Breast epithelium (tissue), 4 donors: ENCODE measurements at regions of chr17 and their contacts with region 1.

Region 1: DNA sequence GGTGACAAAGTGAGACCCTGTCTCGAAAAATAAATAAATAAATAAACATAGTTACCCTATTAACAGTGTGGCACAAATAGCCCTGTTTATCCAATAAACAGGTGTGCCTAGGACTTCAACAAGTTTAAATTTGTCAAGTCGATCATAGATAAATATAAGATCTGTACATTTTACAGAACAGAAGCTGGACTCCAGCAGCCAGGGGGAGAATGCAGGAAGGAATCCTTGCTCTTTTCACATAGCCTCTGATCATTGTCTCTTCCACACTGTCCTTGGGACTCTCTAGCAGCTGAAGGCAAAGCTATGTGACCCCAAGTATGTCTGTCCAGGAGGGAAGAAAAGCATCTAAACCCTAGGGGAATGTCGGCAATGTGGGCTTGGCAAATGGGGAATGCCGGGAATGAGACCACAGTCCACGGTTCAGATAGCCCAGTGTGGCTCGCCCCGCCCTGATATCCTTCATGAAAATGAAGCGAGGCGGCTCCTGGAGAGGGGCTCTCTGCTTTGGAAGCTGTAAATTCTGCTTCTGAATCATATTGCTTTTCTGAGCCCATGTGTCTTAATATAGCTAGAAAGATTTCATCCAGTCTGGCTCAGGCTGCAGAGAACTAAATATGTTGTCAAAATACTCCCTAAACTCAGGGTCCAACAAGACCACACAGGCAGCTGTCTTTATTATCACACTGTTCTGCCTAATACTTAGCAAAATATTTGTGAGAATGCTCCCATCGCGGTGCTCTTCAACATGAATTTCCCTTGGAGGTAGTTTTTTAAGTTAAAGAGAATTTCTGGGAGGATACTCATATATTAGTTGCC is 24.9 kb upstream of the GRB2 start:
- DNase-seq: no peak
- H3K4me3 ChIP-seq: no peak overlapping the region
- H3K27ac ChIP-seq: no peak overlapping the region
- H3K4me1 ChIP-seq: no peaks in the 10 kb centered on the region
- H3K27me3 ChIP-seq: no peaks in the 10 kb centered on the region
- CTCF ChIP-seq: no peak
- POLR2A ChIP-seq: no peak

Region 2: GRCh38 chr17:75468291-75468754 is 38.0 kb after region 1 on chr17:
- intact Hi-C with region 1: loop called (anchors 2 kb)
- DNase-seq: no peak
- H3K4me3 ChIP-seq: no peak overlapping the region
- H3K27ac ChIP-seq: no peak overlapping the region
- H3K4me1 ChIP-seq: no peaks in the 10 kb centered on the region
- H3K27me3 ChIP-seq: no peaks in the 10 kb centered on the region
- CTCF ChIP-seq: no peak
- POLR2A ChIP-seq: no peak

Region 3: DNA sequence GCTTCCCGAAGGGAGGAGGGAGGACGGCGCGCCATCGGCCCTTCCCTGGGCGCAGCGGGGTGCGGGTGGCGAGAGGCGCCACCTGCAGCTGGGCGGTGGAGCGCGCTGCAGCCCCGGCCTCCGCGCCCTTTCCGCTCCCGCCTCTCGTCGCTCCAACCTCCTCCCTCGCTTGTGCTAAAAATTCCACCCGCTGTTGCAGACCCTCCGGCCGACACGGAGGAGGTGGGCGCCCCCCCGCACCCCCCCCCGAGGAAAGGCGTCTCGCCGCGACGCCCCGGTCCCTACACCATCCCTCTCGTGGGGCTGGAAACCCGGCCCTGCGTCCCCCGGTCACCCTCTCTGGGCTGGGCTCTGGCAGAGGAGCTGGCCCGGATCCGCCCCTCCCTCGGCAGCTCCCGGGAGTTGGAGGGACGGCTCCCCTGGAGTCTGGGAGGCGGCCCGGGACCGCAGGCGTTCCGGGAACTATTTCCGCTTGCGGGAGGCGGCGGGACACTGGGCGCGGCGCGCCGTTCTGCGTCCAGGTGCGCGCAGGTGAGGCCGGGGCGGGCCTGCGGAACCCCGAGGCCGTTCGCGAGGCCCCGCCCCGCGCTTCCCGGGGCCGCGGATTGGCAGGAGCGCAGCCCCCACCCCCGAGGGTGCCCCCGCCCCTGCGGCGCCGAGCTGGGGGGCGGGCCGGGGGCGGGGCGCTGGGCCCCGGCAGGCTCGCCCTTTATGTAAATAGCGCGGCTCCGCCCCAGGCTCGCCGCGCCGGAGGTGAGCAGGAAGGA is 94.8 kb after region 1 on chr17 and contains the start of gene LLGL2:
- intact Hi-C with region 1: loop called (anchors 10 kb)
- DNase-seq: peak; percentile 79 to 80
- H3K4me3 ChIP-seq: peak within 1 kb of the TSS; percentile 63 to 71 (median 70)
- H3K27ac ChIP-seq: peak within 1 kb of the TSS; percentile 73 to 80
- H3K4me1 ChIP-seq: no peaks in the 10 kb centered on the region
- H3K27me3 ChIP-seq: no peaks in the 10 kb centered on the region
- CTCF ChIP-seq: peak in 2 of 3 donors; percentile 31 to 41
- POLR2A ChIP-seq: no peak
- total RNA-seq, gene LLGL2: 4.6 to 60.2 (median 52.4) TPM

Region 4: GRCh38 chr17:75589012-75589918 is 158.9 kb after region 1 on chr17:
- intact Hi-C with region 1: loop called (anchors 10 kb)
- DNase-seq: peak; percentile 88 to 97
- H3K4me3 ChIP-seq: peak overlapping the region; percentile 70 to 91 (median 73)
- H3K27ac ChIP-seq: peak overlapping the region; percentile 81 to 96
- H3K4me1 ChIP-seq: peaks cover 0 to 7% of the 10 kb centered on the region in 2 donors
- H3K27me3 ChIP-seq: no peaks in the 10 kb centered on the region
- CTCF ChIP-seq: peak in 2 of 3 donors; percentile 26 to 92
- POLR2A ChIP-seq: no peak

Region 5: DNA sequence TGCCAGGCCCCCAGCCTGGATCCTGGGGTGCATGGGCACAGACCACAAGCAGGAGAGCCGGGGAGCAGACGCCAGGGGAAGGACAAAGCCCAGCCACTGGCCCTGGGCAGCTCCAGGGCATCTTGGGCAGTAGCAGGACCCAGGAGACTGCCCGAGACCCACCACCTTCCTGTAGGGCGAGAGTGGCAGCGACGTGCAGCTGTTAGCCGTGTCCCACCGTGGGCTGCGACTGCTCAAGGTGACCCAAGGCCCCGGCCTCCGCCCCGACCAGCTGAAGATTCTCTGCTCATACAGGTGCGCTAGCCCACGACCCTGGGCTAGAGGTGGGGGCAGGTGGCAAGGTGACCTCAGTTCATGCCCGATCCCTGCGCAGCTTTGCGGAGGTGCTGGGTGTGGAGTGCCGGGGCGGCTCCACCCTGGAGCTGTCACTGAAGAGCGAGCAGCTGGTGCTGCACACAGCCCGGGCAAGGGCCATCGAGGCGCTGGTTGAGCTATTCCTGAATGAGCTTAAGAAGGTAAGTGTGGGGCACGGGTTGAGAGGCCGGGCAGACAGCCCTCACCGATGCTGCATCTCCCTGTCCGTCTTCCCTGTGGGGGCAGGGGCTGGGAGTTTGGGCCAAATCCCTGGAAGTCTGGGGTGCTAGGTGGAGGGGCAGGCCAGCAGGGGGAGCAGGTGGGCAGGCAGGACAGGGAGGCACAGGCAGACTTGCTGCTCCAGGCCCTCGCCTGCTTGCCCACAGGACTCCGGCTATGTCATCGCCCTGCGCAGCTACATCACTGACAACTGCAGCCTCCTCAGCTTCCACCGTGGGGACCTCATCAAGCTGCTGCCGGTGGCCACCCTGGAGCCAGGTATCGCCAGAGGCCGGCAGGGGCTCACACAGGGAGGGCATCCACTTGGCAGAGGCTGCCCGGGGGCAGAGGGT is 189.4 kb after region 1 on chr17:
- intact Hi-C with region 1: no loop called
- DNase-seq: no peak
- H3K4me3 ChIP-seq: no peak overlapping the region
- H3K27ac ChIP-seq: no peak overlapping the region
- H3K4me1 ChIP-seq: no peaks in the 10 kb centered on the region
- H3K27me3 ChIP-seq: no peaks in the 10 kb centered on the region
- CTCF ChIP-seq: no peak
- POLR2A ChIP-seq: no peak

Region 6: GRCh38 chr17:76452660-76453430 is 1022.5 kb after region 1 on chr17 and contains the start of gene UBE2O:
- intact Hi-C with region 1: no loop called
- DNase-seq: peak; percentile 64 to 82
- H3K4me3 ChIP-seq: peak within 1 kb of the TSS; percentile 84 to 97 (median 87)
- H3K27ac ChIP-seq: peak within 1 kb of the TSS; percentile 50 to 68
- H3K4me1 ChIP-seq: no peaks in the 10 kb centered on the region
- H3K27me3 ChIP-seq: no peaks in the 10 kb centered on the region
- CTCF ChIP-seq: peak in 2 of 3 donors; percentile 24 to 47
- POLR2A ChIP-seq: no peak
- total RNA-seq, gene UBE2O: 17.4 to 22.5 (median 17.7) TPM